ENCODE measurements at regions of chr6 and their contacts with region 1.

Region 1: GRCh38 chr6:164322533-164322932 is 908.0 kb downstream of the QKI start:
- DNase-seq: peak; percentile 82
- H3K4me3 Mint-ChIP-seq: peak overlapping the region; percentile 42
- H3K27ac Mint-ChIP-seq: peak overlapping the region; percentile 85
- H3K4me1 Mint-ChIP-seq: peaks cover 6% of the 10 kb centered on the region
- H3K27me3 Mint-ChIP-seq: no peaks in the 10 kb centered on the region
- CTCF ChIP-seq: no peak

Region 2: GRCh38 chr6:164097557-164098398 is 224.8 kb before region 1 on chr6:
- CTCF ChIA-PET with region 1: no interaction called
- POLR2A ChIA-PET with region 1: interaction called, 10 read pairs
- intact Hi-C with region 1: no loop called
- DNase-seq: peak; percentile 73
- H3K4me3 Mint-ChIP-seq: no peak overlapping the region
- H3K27ac Mint-ChIP-seq: peak overlapping the region; percentile 44
- H3K4me1 Mint-ChIP-seq: peaks cover 54% of the 10 kb centered on the region
- H3K27me3 Mint-ChIP-seq: no peaks in the 10 kb centered on the region
- CTCF ChIP-seq: no peak

Measured in MCF 10A (cell line).